ENCODE measurements at regions of chr17 and their contacts with region 1.

Region 1: GRCh38 chr17:81294856-81295680 is at the start of gene SLC38A10:
- DNase-seq: peak; percentile 89
- ATAC-seq: peak; percentile 75
- H3K4me3 ChIP-seq: peak within 1 kb of the TSS; percentile 78
- H3K27ac ChIP-seq: peak within 1 kb of the TSS; percentile 38
- H3K4me1 ChIP-seq: peaks cover 13% of the 10 kb centered on the region
- H3K27me3 ChIP-seq: no peaks in the 10 kb centered on the region
- CTCF ChIP-seq: no peak
- total RNA-seq, gene SLC38A10: 77.8 and 118 TPM in 2 replicates

Region 2: DNA sequence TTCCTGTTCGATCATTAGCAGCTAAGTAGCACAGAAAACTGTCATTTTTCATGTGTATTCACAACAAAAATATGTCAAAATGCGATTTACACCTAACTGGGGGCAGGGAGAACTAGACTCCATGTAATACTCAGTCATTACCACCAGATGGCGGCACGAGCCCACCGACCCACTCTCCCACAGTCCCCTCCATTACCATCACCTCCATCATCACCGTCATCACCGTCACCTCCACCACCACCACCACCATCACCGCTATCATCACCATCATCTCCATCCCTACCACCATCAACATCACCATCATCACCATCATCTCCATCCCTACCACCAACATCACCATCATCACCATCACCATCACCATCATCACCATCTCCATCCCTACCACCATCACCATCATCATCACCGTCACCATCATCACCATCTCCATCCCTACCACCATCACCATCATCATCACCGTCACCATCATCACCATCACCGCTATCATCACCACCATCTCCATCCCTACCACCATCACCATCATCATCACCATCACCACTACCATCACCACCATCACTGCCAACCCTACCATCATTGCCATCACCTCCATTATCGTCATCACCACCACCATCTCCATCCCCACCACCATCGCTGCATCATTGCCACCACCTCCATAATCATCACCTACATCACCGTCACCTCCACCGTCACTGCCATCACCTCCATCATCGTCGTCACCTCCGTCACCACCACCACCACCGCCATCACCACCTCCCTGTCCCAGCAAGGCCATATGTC is 41.5 kb before region 1 on chr17:
- CTCF ChIA-PET with region 1: no interaction called
- POLR2A ChIA-PET with region 1: interaction called, 10 read pairs
- intact Hi-C with region 1: no loop called
- DNase-seq: peak; percentile 44
- ATAC-seq: no peak
- H3K4me3 ChIP-seq: no peak overlapping the region
- H3K27ac ChIP-seq: no peak overlapping the region
- H3K4me1 ChIP-seq: 0 out of 2 replicates have a peak, but pooled peaks cover 3% of the 10 kb centered on the region
- H3K27me3 ChIP-seq: no peaks in the 10 kb centered on the region
- CTCF ChIP-seq: peak; percentile 85

Region 3: DNA sequence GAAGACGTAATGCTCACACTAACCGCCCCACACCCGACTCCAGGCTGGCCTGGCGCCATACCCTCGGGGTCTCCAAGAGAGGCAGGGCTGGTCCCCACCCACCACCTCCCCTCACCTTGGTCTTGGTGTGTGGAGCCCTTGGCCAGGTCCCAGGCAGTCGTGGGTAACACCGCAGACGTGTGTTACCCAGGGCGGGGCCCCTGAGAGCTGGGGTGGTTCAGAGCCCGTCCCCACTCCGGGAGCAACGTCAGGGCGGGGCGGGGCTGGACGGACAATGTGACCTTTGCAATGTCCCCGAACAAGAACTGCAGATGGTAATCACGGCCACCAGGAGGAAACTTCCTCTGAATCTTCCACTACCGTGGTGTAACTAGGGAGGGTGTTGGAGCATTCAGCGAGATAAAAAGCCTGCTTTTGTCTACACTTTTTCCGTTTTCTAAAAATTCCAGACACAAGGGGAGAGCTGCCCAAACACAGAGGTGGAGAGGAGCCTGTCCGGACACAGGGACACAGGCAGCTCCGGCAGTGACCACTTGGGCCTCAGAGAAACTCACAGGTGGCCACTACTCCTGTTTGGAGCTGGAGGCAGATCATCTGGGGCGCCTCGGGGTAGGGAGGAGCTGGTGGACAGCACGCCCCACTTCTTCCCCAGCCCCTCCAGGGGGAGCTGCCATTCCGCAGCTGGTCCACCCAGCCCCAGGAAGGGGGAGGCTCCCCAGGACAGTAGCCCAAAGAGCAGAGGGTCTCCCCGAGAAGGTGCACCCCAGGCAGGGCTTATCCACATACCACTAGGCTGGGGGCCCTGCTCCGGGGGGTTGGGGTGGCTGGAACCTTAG is 14.2 kb after region 1 on chr17:
- CTCF ChIA-PET with region 1: interaction called, 9 read pairs
- POLR2A ChIA-PET with region 1: no interaction called
- intact Hi-C with region 1: loop called (anchors 1 kb)
- DNase-seq: peak; percentile 85
- ATAC-seq: peak; percentile 90
- H3K4me3 ChIP-seq: peak overlapping the region; percentile 65
- H3K27ac ChIP-seq: peak overlapping the region; percentile 49
- H3K4me1 ChIP-seq: peaks cover 11% of the 10 kb centered on the region
- H3K27me3 ChIP-seq: no peaks in the 10 kb centered on the region
- CTCF ChIP-seq: peak; percentile 66

Region 4: GRCh38 chr17:81340607-81341515 is 45.8 kb after region 1 on chr17:
- CTCF ChIA-PET with region 1: no interaction called
- POLR2A ChIA-PET with region 1: no interaction called
- intact Hi-C with region 1: loop called (anchors 5 kb)
- DNase-seq: peak; percentile 29
- ATAC-seq: no peak
- H3K4me3 ChIP-seq: peak overlapping the region; percentile 79
- H3K27ac ChIP-seq: peak overlapping the region; percentile 86
- H3K4me1 ChIP-seq: peaks cover 39% of the 10 kb centered on the region
- H3K27me3 ChIP-seq: no peaks in the 10 kb centered on the region
- CTCF ChIP-seq: no peak

Region 5: DNA sequence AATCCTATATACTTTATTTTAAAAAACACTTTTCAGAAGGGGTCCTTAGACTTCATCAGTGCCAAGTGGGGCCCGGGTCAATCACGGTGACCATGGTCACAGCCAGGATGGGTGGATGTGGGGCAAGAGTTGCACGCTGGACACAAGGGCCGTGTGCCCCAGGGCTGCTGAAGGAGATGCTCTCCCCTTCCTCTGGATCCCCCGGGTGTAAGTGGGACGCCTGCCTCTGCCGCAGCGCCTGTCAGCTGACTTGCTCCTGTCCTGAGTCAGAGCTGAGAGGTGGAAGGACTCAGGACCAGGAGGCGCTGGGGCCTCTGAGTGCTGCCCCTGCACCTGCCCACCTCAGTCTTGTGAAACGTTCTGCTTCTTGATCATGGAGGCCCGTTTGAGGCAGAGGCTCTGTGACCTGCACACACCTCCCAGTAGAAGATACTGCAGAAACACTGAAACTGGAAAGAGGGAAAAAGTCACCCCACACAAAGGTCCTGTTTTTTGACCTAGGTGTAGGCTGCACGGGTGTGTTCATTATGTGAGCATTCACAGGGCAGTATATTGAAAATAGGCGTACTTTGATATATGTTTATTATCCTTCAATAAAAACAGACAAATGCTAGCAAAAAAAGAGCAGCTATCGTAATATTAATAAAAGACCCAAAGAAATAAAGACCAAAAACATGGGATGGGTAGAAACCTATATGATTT is 59.3 kb after region 1 on chr17:
- CTCF ChIA-PET with region 1: no interaction called
- POLR2A ChIA-PET with region 1: no interaction called
- intact Hi-C with region 1: no loop called
- DNase-seq: no peak
- ATAC-seq: no peak
- H3K4me3 ChIP-seq: no peak overlapping the region
- H3K27ac ChIP-seq: no peak overlapping the region
- H3K4me1 ChIP-seq: peaks cover 10% of the 10 kb centered on the region
- H3K27me3 ChIP-seq: no peaks in the 10 kb centered on the region
- CTCF ChIP-seq: no peak

Region 6: GRCh38 chr17:81365148-81365600 is 70.1 kb after region 1 on chr17:
- CTCF ChIA-PET with region 1: no interaction called
- POLR2A ChIA-PET with region 1: interaction called, 4 read pairs
- intact Hi-C with region 1: loop called (anchors 5 kb)
- DNase-seq: peak; percentile 92
- ATAC-seq: peak; percentile 73
- H3K4me3 ChIP-seq: peak overlapping the region; percentile 67
- H3K27ac ChIP-seq: peak overlapping the region; percentile 90
- H3K4me1 ChIP-seq: peaks cover 37% of the 10 kb centered on the region
- H3K27me3 ChIP-seq: no peaks in the 10 kb centered on the region
- CTCF ChIP-seq: no peak

Region 7: DNA sequence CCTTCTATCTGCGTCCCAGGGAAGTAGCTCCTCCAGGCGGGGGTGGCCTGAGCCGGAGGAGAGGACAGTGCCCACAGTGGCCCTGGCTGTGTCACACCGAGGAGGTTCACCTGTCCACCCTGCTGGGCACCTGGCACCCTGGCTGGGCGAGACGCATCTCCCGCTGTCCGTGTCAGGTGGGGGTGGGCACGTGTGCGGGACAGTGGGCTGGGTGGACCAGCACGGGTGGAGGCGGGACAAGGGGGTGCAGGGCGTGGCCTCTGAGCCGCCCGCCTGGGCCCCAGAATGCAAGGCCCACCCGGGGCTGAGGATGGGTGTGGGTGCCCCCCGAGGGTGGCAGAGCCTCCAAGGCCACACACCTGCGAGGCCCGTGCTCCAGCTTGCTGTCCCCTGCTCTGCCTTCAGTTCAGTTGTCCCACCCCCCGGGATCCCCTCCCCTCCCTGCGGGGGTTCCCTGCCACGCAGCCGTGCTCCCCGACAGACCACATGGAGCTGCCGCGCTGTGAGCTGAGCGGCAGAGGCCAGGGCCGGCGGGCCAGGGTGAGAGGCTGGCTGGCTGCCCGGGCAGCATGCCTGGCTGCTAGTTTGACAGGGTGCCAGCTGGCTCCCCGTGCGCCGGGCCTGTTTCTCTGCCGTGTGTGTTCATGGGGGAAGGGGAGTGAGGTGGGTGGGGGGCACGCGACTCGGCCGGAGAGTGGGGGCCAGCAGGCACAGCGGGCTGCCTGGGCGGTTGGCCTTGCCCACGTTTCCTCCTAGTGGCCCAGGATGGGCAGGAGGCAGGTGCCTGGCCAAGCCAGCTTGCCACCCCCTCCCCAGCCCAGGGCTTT is 134.1 kb after region 1 on chr17:
- CTCF ChIA-PET with region 1: interaction called, 18 read pairs
- POLR2A ChIA-PET with region 1: no interaction called
- intact Hi-C with region 1: no loop called
- DNase-seq: peak; percentile 81
- ATAC-seq: peak; percentile 69
- H3K4me3 ChIP-seq: no peak overlapping the region
- H3K27ac ChIP-seq: no peak overlapping the region
- H3K4me1 ChIP-seq: peaks cover 12% of the 10 kb centered on the region
- H3K27me3 ChIP-seq: no peaks in the 10 kb centered on the region
- CTCF ChIP-seq: no peak

Region 8: DNA sequence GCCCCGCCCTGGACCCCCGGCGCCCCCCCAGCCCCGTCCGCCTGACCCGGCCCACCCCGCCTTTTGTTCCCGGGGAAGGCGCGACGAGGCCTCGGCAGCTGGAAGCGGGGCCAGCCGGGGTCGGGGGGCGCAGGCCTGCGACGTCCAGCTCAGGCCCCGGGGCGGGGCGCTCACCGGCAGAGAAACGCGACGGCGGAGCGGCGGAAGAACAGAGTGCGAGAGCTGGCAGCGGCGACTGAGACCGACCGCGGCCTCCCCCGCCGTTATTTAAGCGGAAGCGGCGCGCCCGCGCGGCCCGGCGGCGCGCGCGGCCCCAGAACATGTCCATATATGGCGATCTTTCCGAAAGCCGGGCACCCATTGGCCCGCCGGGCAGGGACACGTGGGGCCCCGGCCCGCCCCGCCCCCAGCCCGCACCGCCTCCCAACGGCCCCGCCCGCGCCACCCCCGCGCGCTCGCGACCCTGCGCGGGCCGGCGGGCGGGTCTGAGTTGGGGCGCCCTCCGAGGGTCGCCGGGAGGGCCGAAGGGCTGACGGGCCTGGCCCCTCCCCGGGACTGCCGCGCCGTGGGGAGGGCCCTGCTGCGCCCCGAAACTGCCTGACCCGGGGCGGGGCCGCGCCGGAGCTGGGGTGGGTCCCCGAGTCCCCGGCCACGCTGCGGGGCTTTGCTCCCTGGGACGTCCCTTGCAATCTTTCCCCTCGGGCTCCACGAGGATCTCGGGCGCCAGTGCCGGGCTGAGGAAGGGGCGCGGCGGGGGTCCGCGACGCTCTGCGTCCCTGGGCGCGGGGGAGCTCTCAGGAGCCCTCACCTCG is 217.7 kb after region 1 on chr17 and contains the start of gene ACTG1:
- CTCF ChIA-PET with region 1: no interaction called
- POLR2A ChIA-PET with region 1: interaction called, 11 read pairs
- intact Hi-C with region 1: no loop called
- DNase-seq: peak; percentile 95
- ATAC-seq: peak; percentile 25
- H3K4me3 ChIP-seq: peak within 1 kb of the TSS; percentile 99
- H3K27ac ChIP-seq: peak within 1 kb of the TSS; percentile 88
- H3K4me1 ChIP-seq: peaks cover 38% of the 10 kb centered on the region
- H3K27me3 ChIP-seq: no peaks in the 10 kb centered on the region
- CTCF ChIP-seq: no peak
- total RNA-seq, gene ACTG1: 4,503 and 4,798 TPM in 2 replicates

Measured in PC-3 (cell line).